Panc1 (cell line): ENCODE measurements at regions of chr15 and their contacts with region 1.

Region 1: GRCh38 chr15:80455668-80456442 is 51.7 kb downstream of the ARNT2 start:
- DNase-seq: peak; percentile 53
- ATAC-seq: peak; percentile 80
- H3K4me3 ChIP-seq: no peak overlapping the region
- H3K27ac ChIP-seq: no peak overlapping the region
- H3K4me1 ChIP-seq: peaks cover 10% of the 10 kb centered on the region
- H3K27me3 ChIP-seq: 0 out of 2 replicates have a peak, but pooled peaks cover 2% of the 10 kb centered on the region
- CTCF ChIP-seq: peak; percentile 98

Region 2: DNA sequence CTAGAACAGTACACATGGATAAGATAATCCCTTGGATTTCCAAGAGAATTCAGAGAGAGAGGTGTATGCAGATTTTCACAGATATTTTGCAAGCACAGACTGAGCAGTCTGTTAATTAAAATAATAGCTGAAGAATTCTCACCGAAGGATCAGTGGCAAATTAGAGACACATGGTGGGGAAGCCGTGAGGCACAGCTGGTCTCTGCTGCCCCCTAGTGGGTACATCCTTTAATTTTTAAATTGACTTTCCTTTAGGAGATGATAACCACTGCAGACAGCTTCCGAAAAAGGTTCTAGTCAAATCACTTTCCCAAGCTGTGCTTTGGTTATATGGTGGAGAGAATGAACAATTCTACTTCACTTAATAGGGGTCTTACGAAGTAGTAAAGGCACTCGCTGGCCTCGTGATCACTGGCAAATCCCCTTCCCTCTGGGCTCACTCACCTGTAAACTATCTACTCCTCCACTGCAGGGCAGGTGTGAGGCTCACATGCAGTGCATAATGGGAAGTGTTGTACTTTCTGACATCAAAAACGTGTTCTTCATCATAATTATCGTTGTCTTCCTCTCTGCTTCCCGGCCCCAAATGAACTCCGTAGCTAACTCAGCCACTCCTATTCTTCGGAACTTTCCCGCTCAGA is 514.3 kb after region 1 on chr15:
- CTCF ChIA-PET with region 1: interaction called, 3 read pairs
- POLR2A ChIA-PET with region 1: no interaction called
- in situ Hi-C with region 1: no loop called
- intact Hi-C with region 1: loop called (anchors 5 kb)
- DNase-seq: no peak
- ATAC-seq: peak; percentile 85
- H3K4me3 ChIP-seq: no peak overlapping the region
- H3K27ac ChIP-seq: no peak overlapping the region
- H3K4me1 ChIP-seq: no peaks in the 10 kb centered on the region
- H3K27me3 ChIP-seq: no peaks in the 10 kb centered on the region
- CTCF ChIP-seq: peak; percentile 92